CD8-positive, alpha-beta T cell (primary cell): ENCODE measurements at regions of chr1 and their contacts with region 1.

Region 1: GRCh38 chr1:66339944-66340343 is 194.0 kb upstream of the SGIP1 start:
- DNase-seq: peak in 2 of 9 experiments; percentile 24 to 48
- ATAC-seq: no peak
- H3K4me3 ChIP-seq: no peak overlapping the region
- H3K4me3 Mint-ChIP-seq: peak overlapping the region; percentile 54
- H3K27ac ChIP-seq: no peak overlapping the region
- H3K27ac Mint-ChIP-seq: peak overlapping the region; percentile 22
- H3K4me1 ChIP-seq: peaks cover 67% of the 10 kb centered on the region
- H3K4me1 Mint-ChIP-seq: peaks cover 80% of the 10 kb centered on the region
- H3K27me3 ChIP-seq: no peaks in the 10 kb centered on the region
- H3K27me3 Mint-ChIP-seq: no peaks in the 10 kb centered on the region
- CTCF ChIP-seq: no peak

Region 2: DNA sequence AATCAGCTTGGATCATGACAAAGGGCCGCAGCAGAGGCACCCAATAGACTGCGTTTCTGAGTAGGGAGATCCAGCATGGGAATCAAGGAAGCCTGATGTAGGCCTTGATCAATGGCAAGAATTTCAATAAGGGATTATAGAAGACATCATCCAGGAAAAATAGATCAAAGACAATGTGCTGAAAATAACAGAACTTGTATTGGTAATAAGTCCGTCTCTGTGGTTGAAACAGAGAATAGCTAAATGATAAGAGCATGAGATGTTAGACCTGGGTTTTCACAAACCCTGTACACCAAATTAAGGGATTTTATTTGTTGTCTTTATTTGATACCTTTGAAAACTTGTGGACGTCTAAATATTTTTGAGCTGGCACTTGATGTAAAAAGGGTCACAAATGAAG is 34.0 kb before region 1 on chr1:
- CTCF ChIA-PET with region 1: no interaction called
- POLR2A ChIA-PET with region 1: no interaction called
- intact Hi-C with region 1: no loop called
- DNase-seq: no peak
- ATAC-seq: no peak
- H3K4me3 ChIP-seq: no peak overlapping the region
- H3K4me3 Mint-ChIP-seq: no peak overlapping the region
- H3K27ac ChIP-seq: no peak overlapping the region
- H3K27ac Mint-ChIP-seq: no peak overlapping the region
- H3K4me1 ChIP-seq: peaks cover 20% of the 10 kb centered on the region
- H3K4me1 Mint-ChIP-seq: peaks cover 23% of the 10 kb centered on the region
- H3K27me3 ChIP-seq: no peaks in the 10 kb centered on the region
- H3K27me3 Mint-ChIP-seq: no peaks in the 10 kb centered on the region
- CTCF ChIP-seq: no peak

Region 3: DNA sequence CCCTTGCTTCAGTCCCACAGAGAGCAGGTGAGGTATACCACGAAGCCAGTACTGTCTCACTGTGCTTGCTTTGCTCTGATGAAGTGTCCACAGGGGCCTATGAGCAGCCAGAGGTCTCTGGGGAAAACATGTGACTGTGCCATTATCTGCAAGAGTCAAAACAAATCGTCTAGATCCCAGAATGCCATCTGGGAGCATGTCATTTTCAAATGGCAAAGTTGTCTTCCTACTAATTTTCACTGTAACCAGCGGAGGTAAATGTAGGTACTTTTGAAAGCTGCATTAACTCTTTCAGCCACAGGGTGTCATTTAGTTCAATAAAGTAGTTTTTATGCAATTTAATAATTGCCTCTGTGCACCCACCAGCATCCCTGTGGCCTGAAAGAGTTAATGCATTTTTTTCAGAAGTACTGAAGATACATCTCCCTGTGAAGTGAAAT is 20.4 kb after region 1 on chr1:
- CTCF ChIA-PET with region 1: interaction called, 14 read pairs
- POLR2A ChIA-PET with region 1: interaction called, 3 read pairs
- intact Hi-C with region 1: no loop called
- DNase-seq: no peak
- ATAC-seq: no peak
- H3K4me3 ChIP-seq: no peak overlapping the region
- H3K4me3 Mint-ChIP-seq: no peak overlapping the region
- H3K27ac ChIP-seq: no peak overlapping the region
- H3K27ac Mint-ChIP-seq: no peak overlapping the region
- H3K4me1 ChIP-seq: peaks cover 37% of the 10 kb centered on the region
- H3K4me1 Mint-ChIP-seq: peaks cover 63% of the 10 kb centered on the region
- H3K27me3 ChIP-seq: no peaks in the 10 kb centered on the region
- H3K27me3 Mint-ChIP-seq: no peaks in the 10 kb centered on the region
- CTCF ChIP-seq: peak; percentile 21

Region 4: GRCh38 chr1:66633159-66633558 is 293.2 kb after region 1 on chr1:
- CTCF ChIA-PET with region 1: no interaction called
- POLR2A ChIA-PET with region 1: no interaction called
- intact Hi-C with region 1: no loop called
- DNase-seq: no peak
- ATAC-seq: no peak
- H3K4me3 ChIP-seq: no peak overlapping the region
- H3K4me3 Mint-ChIP-seq: no peak overlapping the region
- H3K27ac ChIP-seq: no peak overlapping the region
- H3K27ac Mint-ChIP-seq: no peak overlapping the region
- H3K4me1 ChIP-seq: no peaks in the 10 kb centered on the region
- H3K4me1 Mint-ChIP-seq: no peaks in the 10 kb centered on the region
- H3K27me3 ChIP-seq: no peaks in the 10 kb centered on the region
- H3K27me3 Mint-ChIP-seq: peaks cover 4% of the 10 kb centered on the region
- CTCF ChIP-seq: no peak